ENCODE measurements at regions of chr4 and their contacts with region 1.

Region 1: GRCh38 chr4:6134612-6135220 is 65.6 kb downstream of the JAKMIP1 start:
- DNase-seq: peak; percentile 24
- ATAC-seq: peak; percentile 86
- H3K4me3 ChIP-seq: no peak overlapping the region
- H3K27ac ChIP-seq: no peak overlapping the region
- H3K4me1 ChIP-seq: no peaks in the 10 kb centered on the region
- H3K27me3 ChIP-seq: no peaks in the 10 kb centered on the region; the same call in 1 of the 2 replicates
- CTCF ChIP-seq: no peak; the same call in 1 of the 2 replicates

Region 2: DNA sequence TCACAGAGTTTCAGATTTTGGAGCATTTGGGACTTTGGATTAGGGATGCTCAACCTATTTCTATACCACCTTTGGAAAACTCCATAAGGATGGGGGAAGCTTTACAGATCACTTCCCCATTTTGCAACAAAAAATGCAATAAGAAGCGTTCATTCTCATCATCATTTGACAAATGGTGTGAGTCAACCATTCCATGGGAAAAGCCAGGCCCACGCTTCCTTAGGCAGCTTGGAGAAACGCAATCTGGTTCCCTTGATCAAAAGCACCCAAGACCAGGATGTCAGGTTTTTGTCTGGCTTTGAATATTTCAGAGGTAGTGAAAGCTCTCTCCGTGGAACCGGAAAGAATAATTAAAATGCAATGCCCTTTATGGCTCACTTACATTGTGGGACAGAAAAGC is 37.1 kb before region 1 on chr4:
- CTCF ChIA-PET with region 1: interaction called, 5 read pairs
- POLR2A ChIA-PET with region 1: interaction called, 10 read pairs
- in situ Hi-C with region 1: no loop called
- intact Hi-C with region 1: no loop called
- DNase-seq: no peak
- ATAC-seq: no peak
- H3K4me3 ChIP-seq: no peak overlapping the region
- H3K27ac ChIP-seq: no peak overlapping the region
- H3K4me1 ChIP-seq: no peaks in the 10 kb centered on the region
- H3K27me3 ChIP-seq: peaks cover 5% of the 10 kb centered on the region
- CTCF ChIP-seq: no peak

Region 3: GRCh38 chr4:6779667-6780555 is 645.2 kb after region 1 on chr4:
- CTCF ChIA-PET with region 1: no interaction called
- POLR2A ChIA-PET with region 1: no interaction called
- in situ Hi-C with region 1: no loop called
- intact Hi-C with region 1: no loop called
- DNase-seq: no peak
- ATAC-seq: no peak
- H3K4me3 ChIP-seq: no peak overlapping the region
- H3K27ac ChIP-seq: no peak overlapping the region
- H3K4me1 ChIP-seq: peaks cover 11% of the 10 kb centered on the region
- H3K27me3 ChIP-seq: no peaks in the 10 kb centered on the region
- CTCF ChIP-seq: no peak